Psoas muscle (tissue), 8 donors: ENCODE measurements at regions of chr2 and their contacts with region 1.

Region 1: DNA sequence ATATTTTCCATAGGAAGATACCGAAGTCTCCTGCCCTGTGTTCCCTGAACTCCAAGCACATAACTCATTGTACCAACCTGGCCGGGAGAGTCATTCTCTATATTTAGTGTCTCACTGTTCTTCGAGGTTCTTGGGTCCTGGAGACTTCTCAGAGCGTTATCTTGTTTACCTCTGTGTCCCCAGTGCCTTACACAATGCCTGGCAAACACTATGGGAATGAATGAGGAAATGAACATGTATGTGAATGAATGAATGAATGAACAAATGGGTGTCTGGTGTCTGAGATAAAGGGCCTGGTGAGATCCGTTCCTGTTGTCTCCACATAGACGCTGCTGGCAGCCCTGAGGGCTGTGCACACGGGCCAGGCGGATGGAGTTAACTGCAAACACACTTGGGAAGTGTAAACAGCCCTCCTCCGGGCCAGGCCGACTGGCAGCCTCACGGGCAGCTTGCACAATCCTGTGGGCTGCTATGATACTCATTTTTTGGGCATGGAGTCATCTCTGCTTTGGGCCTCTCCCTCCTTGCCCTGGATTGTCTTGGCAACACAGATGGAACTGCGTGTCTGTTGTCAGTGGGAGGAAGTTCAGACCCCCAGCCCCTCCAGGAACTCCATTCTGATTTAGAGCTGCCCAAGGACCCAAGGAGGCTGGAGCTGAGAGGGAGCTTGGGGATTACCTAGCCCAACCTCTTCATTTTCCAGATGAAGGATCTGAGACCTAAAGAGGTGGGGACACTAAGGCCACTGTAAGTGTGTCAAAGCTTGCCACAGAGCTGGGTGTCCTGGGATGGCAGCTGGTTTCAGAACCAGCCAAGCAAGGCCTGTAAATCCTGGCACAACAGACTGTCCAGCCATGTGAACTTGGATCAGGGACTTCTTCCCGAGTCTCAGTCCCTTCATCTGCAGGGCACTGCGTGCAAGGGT is 124.4 kb downstream of the INHBB start:
- DNase-seq: peak; percentile 85 to 94
- ATAC-seq: peak; percentile 89 to 92 (median 90)
- H3K4me3 ChIP-seq: no peak overlapping the region
- H3K27ac ChIP-seq: peak overlapping the region; percentile 81
- H3K4me1 ChIP-seq: peaks cover 34% of the 10 kb centered on the region
- H3K27me3 ChIP-seq: no peaks in the 10 kb centered on the region
- CTCF ChIP-seq: no peak

Region 2: GRCh38 chr2:120503793-120504571 is 33.7 kb after region 1 on chr2:
- intact Hi-C with region 1: loop called in 1 of 2 experiments (anchors 5 kb)
- DNase-seq: peak; percentile 75 to 94
- ATAC-seq: peak; percentile 89 to 94 (median 92)
- H3K4me3 ChIP-seq: no peak overlapping the region
- H3K27ac ChIP-seq: peak overlapping the region; percentile 80
- H3K4me1 ChIP-seq: peaks cover 15% of the 10 kb centered on the region
- H3K27me3 ChIP-seq: no peaks in the 10 kb centered on the region
- CTCF ChIP-seq: peak; percentile 7

Region 3: DNA sequence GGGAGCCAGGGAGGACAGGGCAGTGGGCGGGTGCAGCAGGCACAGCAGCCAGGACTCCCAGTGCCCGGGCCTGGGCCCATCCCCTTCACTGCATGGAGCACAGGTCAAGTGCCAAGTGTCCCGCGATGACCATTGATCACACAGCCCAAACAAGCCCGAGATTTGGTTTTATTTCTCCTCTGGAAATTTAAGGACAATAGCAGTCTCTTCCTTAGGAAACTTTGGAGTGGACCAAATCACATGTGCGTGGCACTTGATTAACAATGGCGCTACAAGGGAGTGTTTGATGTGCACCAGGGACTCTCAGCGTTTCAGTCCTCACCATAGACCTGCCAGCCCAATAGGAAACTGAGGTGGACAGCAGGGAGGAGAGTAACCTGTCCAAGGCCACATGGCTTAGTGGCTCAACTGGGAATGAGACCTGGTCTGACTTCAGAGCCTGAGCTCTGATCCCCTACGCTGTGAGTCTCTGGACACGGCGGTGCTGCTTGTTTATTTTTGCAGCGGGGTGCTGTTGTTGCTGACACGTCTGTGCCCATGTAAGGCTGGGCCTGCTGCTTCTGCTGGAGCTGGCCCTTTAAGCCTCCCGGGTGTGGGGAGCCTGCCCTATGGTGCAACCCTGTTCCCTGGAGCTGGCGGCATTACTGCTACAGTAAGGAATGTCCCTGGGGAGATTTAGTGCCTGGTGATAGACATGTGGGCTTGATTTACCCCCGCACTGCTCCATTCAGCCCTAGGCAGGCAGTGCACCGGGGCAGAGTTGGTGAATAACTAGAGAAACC is 69.8 kb after region 1 on chr2:
- intact Hi-C with region 1: loop called (anchors 5 to 10 kb)
- DNase-seq: peak; percentile 86 to 96
- ATAC-seq: peak; percentile 81 to 90 (median 83)
- H3K4me3 ChIP-seq: no peak overlapping the region
- H3K27ac ChIP-seq: peak overlapping the region; percentile 90
- H3K4me1 ChIP-seq: peaks cover 49% of the 10 kb centered on the region
- H3K27me3 ChIP-seq: no peaks in the 10 kb centered on the region
- CTCF ChIP-seq: no peak

Region 4: DNA sequence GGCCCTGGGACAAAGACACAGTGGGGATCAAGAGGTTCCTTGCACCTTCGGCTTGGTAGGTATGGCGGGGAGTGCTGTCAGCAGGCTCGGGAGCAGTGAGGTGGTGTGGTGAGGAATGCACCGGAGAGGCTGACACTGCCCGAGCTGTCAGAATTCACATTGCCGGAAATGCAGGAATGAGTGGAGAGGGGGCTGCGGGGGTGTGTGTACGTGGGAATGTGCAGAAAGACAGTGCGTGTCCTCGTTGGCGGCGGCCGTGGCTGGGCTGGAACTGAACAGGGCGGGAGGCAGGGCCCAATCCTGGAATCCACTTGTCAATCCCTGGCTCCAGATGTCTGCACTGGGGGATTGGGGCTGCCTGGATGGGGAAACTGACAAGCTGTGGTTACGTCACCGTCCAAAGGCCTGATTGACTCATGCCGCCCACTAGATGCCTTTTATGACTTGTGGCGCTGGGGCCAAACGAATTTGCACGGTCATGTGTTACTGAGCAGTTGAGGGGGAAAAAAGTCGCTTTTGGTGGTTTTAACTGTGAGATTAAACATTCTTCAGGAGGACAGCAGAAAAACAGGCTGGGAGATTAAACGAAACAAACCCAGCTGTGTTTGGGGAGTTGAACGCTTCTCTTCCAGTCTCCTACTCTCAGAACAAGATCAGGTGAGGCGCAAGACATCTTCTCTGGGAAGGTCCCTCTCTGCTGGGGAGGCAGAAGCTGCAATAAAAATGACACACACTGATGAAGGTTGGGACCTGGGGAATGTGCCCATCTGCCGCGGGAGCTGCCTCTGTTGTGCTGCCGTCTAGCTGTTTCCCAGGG is 76.0 kb after region 1 on chr2:
- intact Hi-C with region 1: loop called in 1 of 2 experiments (anchors 5 kb)
- DNase-seq: peak; percentile 78 to 87
- ATAC-seq: peak in 1 of 4 donors; percentile 6
- H3K4me3 ChIP-seq: no peak overlapping the region
- H3K27ac ChIP-seq: no peak overlapping the region
- H3K4me1 ChIP-seq: peaks cover 31% of the 10 kb centered on the region
- H3K27me3 ChIP-seq: no peaks in the 10 kb centered on the region
- CTCF ChIP-seq: no peak

Region 5: GRCh38 chr2:121264351-121264715 is 794.0 kb after region 1 on chr2:
- intact Hi-C with region 1: no loop called
- DNase-seq: no peak
- ATAC-seq: no peak
- H3K4me3 ChIP-seq: no peak overlapping the region
- H3K27ac ChIP-seq: no peak overlapping the region
- H3K4me1 ChIP-seq: no peaks in the 10 kb centered on the region
- H3K27me3 ChIP-seq: no peaks in the 10 kb centered on the region
- CTCF ChIP-seq: no peak